WTC11 (cell line): ENCODE measurements at regions of chr7 and their contacts with region 1.

Region 1: GRCh38 chr7:135335628-135336139 is 102.0 kb downstream of the STRA8 start:
- DNase-seq: peak; percentile 97
- ATAC-seq: peak; percentile 100
- H3K4me3 Mint-ChIP-seq: no peak overlapping the region
- H3K27ac Mint-ChIP-seq: no peak overlapping the region
- H3K4me1 Mint-ChIP-seq: peaks cover 5% of the 10 kb centered on the region
- H3K27me3 Mint-ChIP-seq: no peaks in the 10 kb centered on the region
- CTCF ChIP-seq: peak; percentile 55; the same call in 1 of the 2 replicates

Region 2: DNA sequence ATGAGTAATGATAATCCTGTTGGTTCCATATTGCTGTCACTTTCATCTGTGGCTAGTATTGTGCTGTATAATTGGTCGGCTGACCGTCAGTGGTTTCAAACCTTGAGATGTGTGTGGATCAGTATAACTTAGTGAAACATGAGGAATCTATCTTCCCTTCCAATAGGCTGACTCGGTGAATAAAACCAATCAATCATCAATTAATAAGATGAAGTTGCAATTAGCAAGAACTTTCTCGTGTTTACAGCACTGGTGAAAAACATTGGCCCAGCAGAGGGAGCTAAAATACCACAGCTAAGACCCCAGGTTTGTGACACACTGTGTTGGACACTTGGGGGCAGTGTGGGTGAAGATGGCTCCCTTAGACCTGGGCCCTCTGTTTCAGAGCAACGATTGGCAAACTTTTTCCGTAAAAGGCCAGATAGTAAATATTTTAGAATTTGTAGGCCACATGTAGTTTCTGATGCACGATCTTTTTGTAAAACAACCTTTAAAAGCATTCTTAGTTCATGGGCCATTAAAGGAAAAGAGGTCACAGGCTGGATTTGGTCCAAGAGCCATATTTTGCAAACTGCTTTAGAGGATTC is 54.2 kb before region 1 on chr7:
- CTCF ChIA-PET with region 1: interaction called, 64 read pairs
- POLR2A ChIA-PET with region 1: interaction called, 3 read pairs
- DNase-seq: peak; percentile 80
- ATAC-seq: peak; percentile 99
- H3K4me3 Mint-ChIP-seq: no peak overlapping the region
- H3K27ac Mint-ChIP-seq: no peak overlapping the region
- H3K4me1 Mint-ChIP-seq: no peaks in the 10 kb centered on the region
- H3K27me3 Mint-ChIP-seq: no peaks in the 10 kb centered on the region; the same call in 1 of the 2 replicates
- CTCF ChIP-seq: peak; percentile 87

Region 3: GRCh38 chr7:135300913-135301765 is 34.5 kb before region 1 on chr7:
- CTCF ChIA-PET with region 1: interaction called, 11 read pairs
- POLR2A ChIA-PET with region 1: no interaction called
- DNase-seq: no peak
- ATAC-seq: peak; percentile 72
- H3K4me3 Mint-ChIP-seq: no peak overlapping the region
- H3K27ac Mint-ChIP-seq: no peak overlapping the region
- H3K4me1 Mint-ChIP-seq: peaks cover 14% of the 10 kb centered on the region
- H3K27me3 Mint-ChIP-seq: peaks cover 6% of the 10 kb centered on the region; the same call in 1 of the 2 replicates
- CTCF ChIP-seq: no peak

Region 4: DNA sequence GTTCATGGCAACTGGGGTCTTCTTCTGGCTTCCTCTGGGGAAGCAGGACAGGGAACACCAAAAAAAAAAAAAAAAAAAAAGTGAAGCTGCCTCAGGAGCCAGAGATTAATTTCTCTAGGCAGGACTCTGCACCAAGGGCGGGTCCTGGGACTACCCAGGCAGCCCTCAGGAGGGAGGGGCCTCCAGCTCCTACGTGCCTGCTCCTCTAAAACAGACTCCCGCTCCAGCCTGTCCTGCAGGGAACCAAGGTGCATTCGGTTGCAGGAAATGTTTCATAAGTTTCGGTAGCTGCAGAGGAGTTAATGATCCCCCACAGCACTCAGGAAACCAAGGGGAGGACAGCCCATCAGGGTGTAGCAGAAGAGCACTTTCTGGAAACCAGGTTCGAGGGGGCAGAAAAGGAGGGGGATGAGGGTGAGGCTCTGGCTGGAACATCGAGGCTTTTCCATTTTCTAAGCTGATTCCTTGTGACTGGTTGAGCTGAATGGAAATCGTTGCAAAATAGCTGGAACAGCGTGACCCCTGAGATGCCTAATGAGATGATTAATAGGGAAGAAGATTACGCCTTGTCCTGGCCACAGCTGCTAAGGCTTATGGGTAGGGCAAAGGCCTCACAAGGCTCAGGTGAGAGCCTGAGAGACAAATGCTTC is 17.9 kb before region 1 on chr7:
- CTCF ChIA-PET with region 1: interaction called, 10 read pairs
- POLR2A ChIA-PET with region 1: no interaction called
- DNase-seq: no peak
- ATAC-seq: peak; percentile 72
- H3K4me3 Mint-ChIP-seq: no peak overlapping the region
- H3K27ac Mint-ChIP-seq: no peak overlapping the region
- H3K4me1 Mint-ChIP-seq: peaks cover 6% of the 10 kb centered on the region; the same call in 1 of the 2 replicates
- H3K27me3 Mint-ChIP-seq: no peaks in the 10 kb centered on the region
- CTCF ChIP-seq: no peak

Region 5: DNA sequence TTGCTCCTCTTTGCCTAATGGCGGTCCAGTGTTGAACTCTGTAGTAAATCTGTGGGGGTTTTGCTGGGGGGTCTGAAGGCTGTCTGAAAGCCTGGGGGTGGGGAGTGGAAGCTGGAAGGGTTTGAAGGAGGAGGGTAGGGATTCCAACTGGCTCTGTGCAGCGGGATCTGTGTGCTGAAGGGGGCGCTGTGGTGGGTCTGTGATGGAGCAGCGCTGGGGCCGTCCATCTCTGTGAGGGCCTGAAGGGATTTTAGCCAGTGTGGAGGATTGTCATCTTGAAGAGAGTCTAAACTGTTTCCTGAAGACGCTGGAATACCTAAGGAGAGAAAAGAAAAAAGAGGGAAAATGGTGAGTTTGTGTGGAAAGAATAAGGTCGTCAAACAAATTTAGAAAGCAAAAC is 27.2 kb after region 1 on chr7:
- CTCF ChIA-PET with region 1: interaction called, 13 read pairs
- POLR2A ChIA-PET with region 1: no interaction called
- DNase-seq: peak; percentile 52
- ATAC-seq: peak; percentile 92
- H3K4me3 Mint-ChIP-seq: no peak overlapping the region
- H3K27ac Mint-ChIP-seq: no peak overlapping the region
- H3K4me1 Mint-ChIP-seq: peaks cover 10% of the 10 kb centered on the region
- H3K27me3 Mint-ChIP-seq: no peaks in the 10 kb centered on the region
- CTCF ChIP-seq: peak; percentile 40; the same call in 1 of the 2 replicates